Activated CD4-positive, alpha-beta memory T cell treated with anti-CD3 and anti-CD28 coated beads, Interleukin-2, amount 10 ng/mL, durations not matched to agents 7 days and 5 days (primary cell): ENCODE measurements at regions of chr14 and their contacts with region 1.

Region 1: GRCh38 chr14:97380539-97380941 is 583.4 kb downstream of the VRK1 start:
- DNase-seq: peak; percentile 68
- H3K4me3 Mint-ChIP-seq: no peak overlapping the region
- H3K27ac Mint-ChIP-seq: peak overlapping the region; percentile 91
- H3K4me1 Mint-ChIP-seq: peaks cover 61% of the 10 kb centered on the region
- H3K27me3 Mint-ChIP-seq: no peaks in the 10 kb centered on the region

Region 2: DNA sequence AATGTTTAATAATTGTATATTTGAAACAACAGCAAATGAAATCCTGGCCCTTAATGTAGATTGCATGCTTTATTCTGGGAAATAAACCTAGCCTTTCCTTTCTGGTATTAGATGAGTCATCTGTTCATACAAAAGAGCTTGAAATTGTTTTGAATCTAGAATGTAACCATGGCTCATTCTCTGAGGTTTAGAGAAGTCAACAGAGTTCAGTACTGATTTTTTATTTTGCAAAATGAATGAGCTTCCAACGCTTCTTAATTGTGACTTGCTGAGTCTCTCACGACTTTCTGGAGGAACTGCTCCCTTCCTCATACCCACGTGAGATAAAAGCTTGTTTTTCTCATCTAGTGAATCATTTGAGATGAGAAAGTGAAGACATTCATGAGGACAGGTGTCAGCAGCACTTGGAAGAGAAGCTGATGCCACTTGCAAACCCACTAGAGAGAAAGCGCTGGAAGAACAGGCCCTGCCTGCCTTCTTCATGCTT is 73.7 kb before region 1 on chr14:
- CTCF ChIA-PET with region 1: no interaction called
- POLR2A ChIA-PET with region 1: interaction called, 12 read pairs
- DNase-seq: no peak
- H3K4me3 Mint-ChIP-seq: no peak overlapping the region
- H3K27ac Mint-ChIP-seq: peak overlapping the region; percentile 77
- H3K4me1 Mint-ChIP-seq: peaks cover 51% of the 10 kb centered on the region
- H3K27me3 Mint-ChIP-seq: no peaks in the 10 kb centered on the region

Region 3: DNA sequence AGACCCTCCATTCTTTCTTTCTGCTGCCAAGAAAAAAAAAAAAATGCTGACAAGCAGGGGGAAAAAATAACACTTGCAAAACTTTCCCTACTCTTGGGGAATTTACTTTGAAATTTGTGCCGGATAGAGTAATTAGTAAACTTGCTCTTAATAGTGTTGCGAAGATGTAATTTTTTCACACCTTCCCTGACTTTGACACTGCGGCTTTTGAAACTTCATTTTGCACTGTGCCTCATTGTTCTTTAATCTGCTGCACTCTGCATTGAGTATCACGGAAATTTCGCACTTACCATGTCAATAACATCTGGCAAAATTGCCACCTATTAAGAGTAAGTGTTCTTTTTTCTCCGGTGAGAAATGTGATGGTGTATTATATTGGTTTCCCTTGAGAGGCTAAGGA is 12.7 kb after region 1 on chr14:
- CTCF ChIA-PET with region 1: no interaction called
- POLR2A ChIA-PET with region 1: no interaction called
- DNase-seq: no peak
- H3K4me3 Mint-ChIP-seq: no peak overlapping the region
- H3K27ac Mint-ChIP-seq: no peak overlapping the region
- H3K4me1 Mint-ChIP-seq: peaks cover 2% of the 10 kb centered on the region
- H3K27me3 Mint-ChIP-seq: no peaks in the 10 kb centered on the region

Region 4: GRCh38 chr14:97408937-97409815 is 28.6 kb after region 1 on chr14:
- CTCF ChIA-PET with region 1: no interaction called
- POLR2A ChIA-PET with region 1: interaction called, 15 read pairs
- DNase-seq: peak; percentile 61
- H3K4me3 Mint-ChIP-seq: peak overlapping the region; percentile 58
- H3K27ac Mint-ChIP-seq: peak overlapping the region; percentile 92
- H3K4me1 Mint-ChIP-seq: peaks cover 32% of the 10 kb centered on the region
- H3K27me3 Mint-ChIP-seq: no peaks in the 10 kb centered on the region